Left cardiac atrium (tissue), 4 donors: ENCODE measurements at regions of chr3 and their contacts with region 1.

Region 1: DNA sequence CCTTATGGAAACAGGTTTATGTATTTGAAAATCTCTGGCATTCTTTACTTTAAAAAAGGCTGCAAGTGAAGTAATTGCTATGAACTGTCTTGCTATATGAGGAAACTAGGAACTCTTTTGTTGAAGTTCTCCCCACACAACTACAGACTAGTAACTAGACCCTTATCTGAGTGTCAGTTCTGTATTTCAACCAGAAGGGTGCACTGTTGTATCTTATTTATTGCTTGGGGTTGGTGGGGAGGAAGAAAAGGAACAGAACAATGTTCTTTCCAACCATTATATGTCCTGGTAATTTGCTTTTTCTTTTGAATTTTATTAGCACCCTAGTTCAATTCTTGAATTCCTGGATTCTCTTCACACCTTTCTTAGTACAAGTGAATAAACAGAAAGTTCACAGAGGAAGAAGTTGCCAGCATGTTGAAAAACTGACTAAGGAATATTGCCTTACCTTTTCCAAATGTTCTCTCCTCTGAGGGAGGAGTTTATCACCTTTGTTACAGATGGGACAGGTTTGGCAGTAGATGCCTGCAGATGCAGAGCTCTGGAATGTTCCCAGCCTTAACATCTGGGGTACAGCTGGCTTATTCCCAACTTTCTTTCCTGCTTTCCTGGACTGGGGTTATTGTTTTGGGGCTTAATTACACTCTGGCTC is 162.4 kb upstream of the CFAP20DC start:
- DNase-seq: no peak
- ATAC-seq: peak; percentile 61 to 78

Region 2: DNA sequence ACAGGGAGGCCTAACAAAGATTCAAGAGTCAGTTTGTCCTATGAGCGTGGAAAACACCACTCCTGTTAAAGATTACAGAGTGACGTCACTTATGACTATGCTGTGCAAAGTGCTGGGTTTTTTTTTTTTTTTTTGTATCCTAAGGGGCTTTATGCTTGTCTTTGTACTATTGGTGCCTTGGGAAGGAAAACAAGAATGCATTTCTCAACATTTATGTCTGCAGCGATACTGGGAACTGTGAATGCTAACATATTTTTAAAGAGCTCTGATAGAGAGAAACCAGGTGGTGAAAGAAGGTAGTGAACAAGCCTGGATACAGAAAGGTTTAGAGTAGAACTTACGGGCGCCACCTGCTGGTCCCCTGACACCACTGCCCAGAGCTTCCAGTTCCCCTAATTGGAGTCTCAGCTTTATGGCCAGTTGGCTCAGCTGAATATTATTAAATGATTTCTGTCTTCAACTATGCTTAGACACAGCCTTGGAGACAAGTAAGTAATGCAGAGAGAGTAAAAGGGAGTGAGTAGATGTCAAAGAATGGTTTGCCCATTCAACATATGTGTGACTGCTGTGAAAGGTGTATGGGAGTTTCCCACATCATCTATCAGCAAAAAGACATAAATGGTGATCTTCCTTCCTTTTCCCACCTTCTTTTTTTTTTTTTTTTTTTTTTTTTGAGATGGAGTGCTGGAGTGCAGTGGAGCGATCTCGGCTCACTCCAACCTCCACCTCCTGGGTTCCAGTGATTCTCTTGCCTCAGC is 645.5 kb after region 1 on chr3:
- intact Hi-C with region 1: loop called in 1 of 2 experiments (anchors 2 kb)
- DNase-seq: peak; percentile 85
- ATAC-seq: peak; percentile 92 to 95